Gastrocnemius medialis (tissue), 4 donors: ENCODE measurements at regions of chr2 and their contacts with region 1.

Region 1: GRCh38 chr2:120934574-120935340 is 199.1 kb downstream of the GLI2 start:
- DNase-seq: peak; percentile 45 to 49
- ATAC-seq: peak; percentile 67 to 68
- H3K4me3 ChIP-seq: no peak overlapping the region
- H3K27ac ChIP-seq: peak overlapping the region; percentile 22 to 38 (median 28)
- H3K4me1 ChIP-seq: peaks cover 52 to 65% of the 10 kb centered on the region in 2 donors
- H3K27me3 ChIP-seq: no peaks in the 10 kb centered on the region
- CTCF ChIP-seq: no peak
- POLR2A ChIP-seq: no peak

Region 2: GRCh38 chr2:120486441-120487378 is 448.0 kb before region 1 on chr2:
- in situ Hi-C with region 1: no loop called
- intact Hi-C with region 1: loop called (anchors 10 kb)
- DNase-seq: peak; percentile 62 to 81
- ATAC-seq: peak; percentile 88 to 92
- H3K4me3 ChIP-seq: no peak overlapping the region
- H3K27ac ChIP-seq: peak overlapping the region in 2 of 4 donors; percentile 57 to 61
- H3K4me1 ChIP-seq: no peaks in the 10 kb centered on the region
- H3K27me3 ChIP-seq: no peaks in the 10 kb centered on the region
- CTCF ChIP-seq: no peak
- POLR2A ChIP-seq: no peak

Region 3: GRCh38 chr2:120885320-120885719 is 49.4 kb before region 1 on chr2:
- in situ Hi-C with region 1: no loop called
- intact Hi-C with region 1: loop called (anchors 5 kb)
- DNase-seq: peak; percentile 22 to 48
- ATAC-seq: peak; percentile 22 to 41
- H3K4me3 ChIP-seq: no peak overlapping the region
- H3K27ac ChIP-seq: peak overlapping the region; percentile 78 to 87 (median 84)
- H3K4me1 ChIP-seq: peaks cover 54 to 60% of the 10 kb centered on the region in 2 donors
- H3K27me3 ChIP-seq: no peaks in the 10 kb centered on the region
- CTCF ChIP-seq: peak in 2 of 5 experiments; percentile 34 to 39
- POLR2A ChIP-seq: no peak

Region 4: DNA sequence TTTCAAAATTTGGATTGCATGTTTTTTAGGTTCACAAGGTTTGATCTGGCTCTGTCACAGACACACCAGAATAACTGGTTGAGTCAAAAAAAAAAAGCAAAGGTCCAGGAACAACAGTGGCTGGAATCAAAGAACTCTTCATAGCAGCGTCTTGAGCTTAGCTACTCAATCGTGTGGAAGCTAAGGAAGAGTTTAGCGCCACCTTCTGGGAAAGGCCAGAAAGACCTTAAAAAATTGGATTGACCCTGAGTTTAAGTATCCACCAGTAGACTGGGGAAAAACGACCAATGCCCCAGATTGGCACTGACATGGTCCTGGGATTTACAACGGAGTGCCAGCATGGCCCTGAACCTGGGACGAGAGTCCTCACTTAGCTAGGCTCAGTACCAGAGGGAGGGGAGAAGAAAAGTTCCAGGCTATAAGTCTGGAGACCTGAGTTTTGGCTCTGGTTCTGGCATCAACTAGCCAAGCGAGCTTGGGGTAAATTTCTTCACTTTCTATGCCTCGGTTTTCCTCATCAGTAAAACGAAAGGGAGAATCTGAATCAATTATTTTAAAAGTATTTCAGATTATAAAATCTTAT is 421.4 kb after region 1 on chr2:
- in situ Hi-C with region 1: no loop called
- intact Hi-C with region 1: loop called (anchors 10 kb)
- DNase-seq: no peak
- ATAC-seq: peak; percentile 35 to 62
- H3K4me3 ChIP-seq: no peak overlapping the region
- H3K27ac ChIP-seq: peak overlapping the region; percentile 14 to 55 (median 50)
- H3K4me1 ChIP-seq: peaks cover 26 to 34% of the 10 kb centered on the region in 2 donors
- H3K27me3 ChIP-seq: no peaks in the 10 kb centered on the region
- CTCF ChIP-seq: peak; percentile 41 to 75 (median 61)
- POLR2A ChIP-seq: no peak